CD4-positive, alpha-beta T cell (primary cell): ENCODE measurements at regions of chr9 and their contacts with region 1.

Region 1: GRCh38 chr9:14043481-14043880 is 270.5 kb downstream of the NFIB start:
- DNase-seq: no peak
- ATAC-seq: no peak
- H3K4me3 ChIP-seq: no peak overlapping the region
- H3K4me3 Mint-ChIP-seq: no peak overlapping the region
- H3K27ac ChIP-seq: no peak overlapping the region
- H3K27ac Mint-ChIP-seq: no peak overlapping the region
- H3K4me1 ChIP-seq: no peaks in the 10 kb centered on the region
- H3K4me1 Mint-ChIP-seq: no peaks in the 10 kb centered on the region
- H3K27me3 ChIP-seq: no peaks in the 10 kb centered on the region
- H3K27me3 Mint-ChIP-seq: no peaks in the 10 kb centered on the region
- CTCF ChIP-seq: no peak

Region 2: GRCh38 chr9:13979941-13980318 is 63.6 kb before region 1 on chr9:
- CTCF ChIA-PET with region 1: no interaction called
- POLR2A ChIA-PET with region 1: no interaction called
- intact Hi-C with region 1: loop called in 1 of 2 experiments (anchors 10 kb)
- DNase-seq: no peak
- ATAC-seq: no peak
- H3K4me3 ChIP-seq: no peak overlapping the region
- H3K4me3 Mint-ChIP-seq: no peak overlapping the region
- H3K27ac ChIP-seq: no peak overlapping the region
- H3K27ac Mint-ChIP-seq: no peak overlapping the region
- H3K4me1 ChIP-seq: no peaks in the 10 kb centered on the region
- H3K4me1 Mint-ChIP-seq: no peaks in the 10 kb centered on the region
- H3K27me3 ChIP-seq: no peaks in the 10 kb centered on the region
- H3K27me3 Mint-ChIP-seq: no peaks in the 10 kb centered on the region
- CTCF ChIP-seq: no peak